ENCODE measurements at regions of chr6 and their contacts with region 1.

Region 1: DNA sequence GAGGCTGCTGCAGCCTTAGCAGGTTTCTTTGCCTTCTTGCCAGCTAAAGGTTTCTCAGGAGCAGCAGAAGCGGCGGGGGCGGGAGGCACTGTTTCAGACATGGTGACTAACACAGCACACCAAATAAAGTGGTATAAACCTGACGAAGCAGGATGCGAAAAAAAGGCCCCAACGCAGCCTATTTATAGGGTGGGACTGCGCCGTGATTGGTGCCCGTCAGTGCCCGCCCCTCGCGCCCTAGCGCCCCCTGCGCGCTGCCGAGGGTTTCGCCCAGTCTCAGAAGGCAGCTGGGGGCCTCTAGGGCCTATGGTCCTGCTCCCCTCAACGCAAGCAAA is 55.0 kb downstream of the TRIM38 start:
- DNase-seq: peak; percentile 94
- H3K4me3 Mint-ChIP-seq: peak overlapping the region; percentile 74
- H3K27ac Mint-ChIP-seq: peak overlapping the region; percentile 94
- H3K4me1 Mint-ChIP-seq: peaks cover 31% of the 10 kb centered on the region
- H3K27me3 Mint-ChIP-seq: no peaks in the 10 kb centered on the region

Region 2: GRCh38 chr6:25942561-25943147 is 74.9 kb before region 1 on chr6:
- CTCF ChIA-PET with region 1: no interaction called
- POLR2A ChIA-PET with region 1: no interaction called
- intact Hi-C with region 1: no loop called
- DNase-seq: no peak
- H3K4me3 Mint-ChIP-seq: no peak overlapping the region
- H3K27ac Mint-ChIP-seq: no peak overlapping the region
- H3K4me1 Mint-ChIP-seq: peaks cover 25% of the 10 kb centered on the region
- H3K27me3 Mint-ChIP-seq: peaks cover 4% of the 10 kb centered on the region

Region 3: DNA sequence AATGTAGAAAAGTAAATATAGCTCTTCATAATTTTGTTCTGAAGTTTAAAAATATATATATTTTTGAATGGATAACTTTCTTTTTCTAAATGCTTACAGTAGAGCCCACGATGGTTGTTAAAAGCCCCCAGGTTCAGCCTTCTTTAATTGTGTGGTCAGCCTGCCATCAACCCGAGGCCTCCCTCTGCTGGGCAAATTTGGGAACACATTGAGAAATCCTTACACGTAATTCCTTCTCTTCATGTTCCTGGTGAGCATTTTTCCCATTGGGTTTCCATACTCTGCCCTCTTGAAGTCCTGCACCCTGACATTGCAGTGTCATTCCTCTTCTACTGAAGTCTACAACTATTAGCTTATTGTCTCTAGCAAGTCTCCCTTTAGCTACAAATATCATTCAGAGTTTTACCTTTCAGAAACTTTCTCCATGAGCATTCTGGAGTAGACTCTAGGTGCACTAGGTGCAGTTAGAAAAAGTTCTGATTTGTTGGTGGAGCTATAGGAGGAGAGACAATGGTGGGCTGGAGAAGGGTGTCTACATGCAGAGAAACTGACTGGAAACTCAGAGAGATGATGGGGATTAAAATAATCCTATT is 14.4 kb before region 1 on chr6:
- CTCF ChIA-PET with region 1: interaction called, 38 read pairs
- POLR2A ChIA-PET with region 1: interaction called, 3 read pairs
- intact Hi-C with region 1: no loop called
- DNase-seq: peak; percentile 54
- H3K4me3 Mint-ChIP-seq: no peak overlapping the region
- H3K27ac Mint-ChIP-seq: no peak overlapping the region
- H3K4me1 Mint-ChIP-seq: peaks cover 4% of the 10 kb centered on the region
- H3K27me3 Mint-ChIP-seq: no peaks in the 10 kb centered on the region

Region 4: DNA sequence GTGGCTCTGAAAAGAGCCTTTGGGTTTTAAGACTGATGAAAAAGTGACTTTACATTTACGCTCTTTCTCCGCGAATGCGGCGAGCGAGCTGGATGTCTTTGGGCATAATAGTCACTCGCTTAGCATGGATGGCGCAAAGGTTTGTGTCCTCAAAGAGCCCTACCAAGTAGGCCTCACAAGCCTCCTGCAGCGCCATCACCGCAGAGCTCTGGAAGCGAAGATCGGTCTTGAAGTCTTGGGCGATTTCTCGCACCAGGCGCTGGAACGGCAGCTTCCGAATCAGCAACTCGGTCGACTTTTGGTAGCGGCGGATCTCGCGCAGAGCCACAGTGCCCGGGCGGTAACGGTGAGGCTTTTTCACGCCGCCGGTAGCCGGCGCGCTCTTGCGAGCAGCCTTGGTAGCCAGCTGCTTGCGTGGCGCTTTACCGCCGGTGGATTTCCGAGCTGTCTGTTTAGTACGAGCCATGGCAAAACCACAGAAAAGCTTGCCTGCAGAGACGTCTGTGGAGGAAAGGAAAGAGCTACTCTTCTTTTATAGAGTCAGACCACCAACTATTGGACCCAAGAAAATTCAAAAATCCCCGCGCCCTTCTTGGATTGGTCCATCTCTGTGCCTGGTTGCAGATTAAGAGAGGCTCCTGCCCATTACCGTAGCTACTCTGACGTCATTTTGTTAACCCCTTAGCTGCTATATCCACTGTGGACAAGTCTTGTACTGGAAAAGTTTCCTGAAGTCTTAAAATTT is 14.2 kb after region 1 on chr6:
- CTCF ChIA-PET with region 1: interaction called, 87 read pairs
- POLR2A ChIA-PET with region 1: interaction called, 147 read pairs
- intact Hi-C with region 1: loop called (anchors 1 kb)
- DNase-seq: peak; percentile 93
- H3K4me3 Mint-ChIP-seq: peak overlapping the region; percentile 83
- H3K27ac Mint-ChIP-seq: peak overlapping the region; percentile 99
- H3K4me1 Mint-ChIP-seq: peaks cover 49% of the 10 kb centered on the region
- H3K27me3 Mint-ChIP-seq: peaks cover 17% of the 10 kb centered on the region

Measured in activated CD4-positive, alpha-beta memory T cell treated with anti-CD3 and anti-CD28 coated beads for 36 hours (primary cell).